ENCODE measurements at regions of chr13 and their contacts with region 1.

Region 1: DNA sequence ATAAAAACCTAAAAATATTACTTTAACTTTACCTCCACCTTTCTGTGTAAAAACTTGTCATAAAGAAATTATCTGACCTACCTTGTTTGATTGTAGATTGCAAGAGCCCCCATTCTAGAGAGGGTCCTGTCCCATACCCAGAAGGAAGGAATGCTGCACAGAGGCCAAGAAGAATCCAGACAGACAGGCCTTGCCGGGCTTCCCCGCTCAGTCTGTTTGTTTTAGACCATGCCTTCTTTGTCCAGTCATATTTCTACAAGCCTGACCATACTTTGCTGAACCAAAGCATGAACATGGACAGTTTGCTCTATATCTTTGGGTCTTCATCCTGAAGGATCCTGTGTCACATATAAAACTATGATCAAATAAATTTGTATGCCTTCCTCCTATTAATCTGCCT is 95.8 kb upstream of the MYCBP2 start:
- DNase-seq: no peak
- ATAC-seq: no peak
- H3K4me3 ChIP-seq: no peak overlapping the region
- H3K27ac ChIP-seq: no peak overlapping the region
- H3K4me1 ChIP-seq: no peaks in the 10 kb centered on the region
- H3K27me3 ChIP-seq: no peaks in the 10 kb centered on the region
- CTCF ChIP-seq: no peak
- EP300 ChIP-seq: no peak
- POLR2A ChIP-seq: no peak
- RAD21 ChIP-seq: no peak

Region 2: GRCh38 chr13:77176350-77176749 is 246.4 kb before region 1 on chr13:
- CTCF ChIA-PET with region 1: no interaction called
- POLR2A ChIA-PET with region 1: no interaction called
- in situ Hi-C with region 1: no loop called
- intact Hi-C with region 1: loop called (anchors 5 kb)
- DNase-seq: peak; percentile 3
- ATAC-seq: no peak
- H3K4me3 ChIP-seq: no peak overlapping the region
- H3K27ac ChIP-seq: no peak overlapping the region
- H3K4me1 ChIP-seq: no peaks in the 10 kb centered on the region
- H3K27me3 ChIP-seq: no peaks in the 10 kb centered on the region
- CTCF ChIP-seq: no peak
- EP300 ChIP-seq: no peak
- POLR2A ChIP-seq: no peak
- RAD21 ChIP-seq: no peak

Region 3: DNA sequence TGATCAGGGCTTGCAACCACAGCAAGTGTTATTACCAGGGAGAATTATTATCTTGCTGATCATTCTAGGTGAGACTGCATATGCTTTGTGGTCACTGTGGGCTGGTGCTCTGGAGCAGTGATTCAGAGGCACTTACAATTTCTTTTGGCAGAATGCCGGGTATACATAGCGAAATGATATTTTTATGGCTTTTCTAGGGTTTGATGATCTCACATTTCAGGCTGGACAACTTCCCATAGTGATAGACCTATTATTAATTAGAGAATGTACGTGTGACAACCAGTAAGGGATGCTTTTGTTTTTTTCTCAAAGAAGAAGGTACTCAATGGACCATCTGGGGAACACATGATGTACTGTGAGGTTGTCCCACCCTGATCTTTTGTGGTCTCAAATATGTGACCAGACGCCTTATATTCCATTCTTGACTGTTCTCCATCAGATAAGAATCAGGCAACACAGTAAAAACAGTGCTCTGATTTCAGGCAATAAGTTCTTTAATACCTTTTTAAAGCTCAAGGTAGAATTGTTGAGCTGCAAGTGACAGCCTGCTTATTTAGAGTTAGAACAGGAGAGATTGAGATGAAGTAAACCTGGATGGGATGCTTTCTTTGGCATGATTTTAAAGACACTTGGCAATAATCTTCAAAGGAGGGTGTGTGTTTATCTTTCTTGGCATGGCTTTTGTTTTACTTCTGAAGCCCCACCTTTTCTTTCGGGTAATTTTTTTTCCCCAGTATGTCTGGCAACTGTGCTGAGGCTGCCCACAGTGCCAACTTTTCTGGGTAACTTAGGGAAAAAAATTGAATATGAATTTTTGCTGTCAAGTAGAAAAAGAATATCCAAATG is 85.4 kb after region 1 on chr13:
- CTCF ChIA-PET with region 1: no interaction called
- POLR2A ChIA-PET with region 1: no interaction called
- in situ Hi-C with region 1: no loop called
- intact Hi-C with region 1: no loop called
- DNase-seq: no peak
- ATAC-seq: no peak
- H3K4me3 ChIP-seq: no peak overlapping the region
- H3K27ac ChIP-seq: no peak overlapping the region
- H3K4me1 ChIP-seq: no peaks in the 10 kb centered on the region
- H3K27me3 ChIP-seq: no peaks in the 10 kb centered on the region
- CTCF ChIP-seq: no peak
- EP300 ChIP-seq: no peak
- POLR2A ChIP-seq: no peak
- RAD21 ChIP-seq: no peak

Measured in HepG2 (cell line).